CD8-positive, alpha-beta memory T cell (primary cell): ENCODE measurements at regions of chr2 and their contacts with region 1.

Region 1: DNA sequence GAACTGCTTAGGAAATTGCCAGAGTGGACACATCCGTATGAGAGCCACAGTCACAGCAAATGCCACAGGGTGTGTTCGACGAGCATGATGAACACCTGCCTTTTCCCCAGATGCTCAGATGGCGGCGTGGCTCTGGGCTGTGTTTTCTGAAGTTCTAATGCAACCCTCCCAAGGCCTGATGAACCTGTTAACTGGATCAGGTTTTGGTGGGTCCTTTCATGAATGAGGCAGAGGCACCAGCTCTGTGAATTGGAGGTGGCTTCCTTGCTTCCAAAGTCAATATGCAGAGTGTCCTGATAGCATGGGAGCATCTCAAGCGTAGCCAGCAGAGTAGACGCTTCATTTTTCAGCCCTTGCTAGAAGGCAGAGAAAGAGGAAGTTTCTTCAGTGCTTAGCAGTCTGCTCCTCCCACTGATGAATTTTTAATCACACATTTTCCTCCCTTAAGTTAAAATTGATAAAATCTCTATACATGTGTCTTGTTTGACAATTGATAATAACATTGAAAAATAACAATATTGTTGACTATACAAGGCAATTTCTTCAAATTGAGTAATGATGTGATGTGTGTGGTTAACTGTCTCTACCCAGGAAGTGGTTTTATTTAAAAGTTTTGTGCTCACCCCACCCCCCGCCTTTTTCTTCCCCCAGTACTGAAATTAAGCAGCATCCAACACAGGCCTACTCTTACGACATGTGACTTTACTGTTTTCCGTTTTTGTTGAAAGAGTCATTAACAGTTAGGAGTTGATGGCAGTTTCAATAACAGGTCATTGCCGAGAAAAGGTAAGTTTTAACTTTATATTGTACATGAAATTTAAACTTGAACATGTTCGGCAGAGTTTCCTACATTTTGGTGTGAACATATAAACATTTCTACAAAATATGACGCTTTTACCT is at the start of gene ARHGAP15:
- DNase-seq: peak; percentile 48 to 81 (median 78)
- H3K4me3 ChIP-seq: peak within 1 kb of the TSS; percentile 86
- H3K4me3 Mint-ChIP-seq: peak within 1 kb of the TSS; percentile 73 to 91 (median 83)
- H3K27ac ChIP-seq: peak within 1 kb of the TSS; percentile 81
- H3K27ac Mint-ChIP-seq: peak within 1 kb of the TSS; percentile 77 to 98 (median 94)
- H3K4me1 ChIP-seq: peaks cover 67% of the 10 kb centered on the region
- H3K4me1 Mint-ChIP-seq: peaks cover 35 to 56% (median 52%) of the 10 kb centered on the region in 3 donors
- H3K27me3 ChIP-seq: no peaks in the 10 kb centered on the region
- H3K27me3 Mint-ChIP-seq: no peaks in the 10 kb centered on the region
- total RNA-seq, gene ARHGAP15: 41.3 to 41.4 TPM

Region 2: GRCh38 chr2:143140864-143141661 is 12.1 kb after region 1 on chr2:
- CTCF ChIA-PET with region 1: interaction called, 10 read pairs
- POLR2A ChIA-PET with region 1: no interaction called
- DNase-seq: no peak
- H3K4me3 ChIP-seq: peak overlapping the region; percentile 39
- H3K4me3 Mint-ChIP-seq: peak overlapping the region; percentile 46 to 81 (median 73)
- H3K27ac ChIP-seq: no peak overlapping the region
- H3K27ac Mint-ChIP-seq: peak overlapping the region in 6 of 8 donors; percentile 10 to 91 (median 40)
- H3K4me1 ChIP-seq: peaks cover 76% of the 10 kb centered on the region
- H3K4me1 Mint-ChIP-seq: peaks cover 85 to 98% (median 96%) of the 10 kb centered on the region in 3 donors
- H3K27me3 ChIP-seq: no peaks in the 10 kb centered on the region
- H3K27me3 Mint-ChIP-seq: no peaks in the 10 kb centered on the region